ENCODE measurements at regions of chr5 and their contacts with region 1.

Region 1: GRCh38 chr5:60295423-60295822 is 401.9 kb upstream of the PDE4D start:
- DNase-seq: peak in 1 of 2 donors; percentile 12
- ATAC-seq: peak in 1 of 8 donors; percentile 58
- H3K4me3 ChIP-seq: no peak overlapping the region
- H3K27ac ChIP-seq: no peak overlapping the region
- H3K4me1 ChIP-seq: no peaks in the 10 kb centered on the region
- H3K27me3 ChIP-seq: no peaks in the 10 kb centered on the region
- CTCF ChIP-seq: peak in 8 of 9 donors; percentile 11 to 63 (median 45)

Region 2: DNA sequence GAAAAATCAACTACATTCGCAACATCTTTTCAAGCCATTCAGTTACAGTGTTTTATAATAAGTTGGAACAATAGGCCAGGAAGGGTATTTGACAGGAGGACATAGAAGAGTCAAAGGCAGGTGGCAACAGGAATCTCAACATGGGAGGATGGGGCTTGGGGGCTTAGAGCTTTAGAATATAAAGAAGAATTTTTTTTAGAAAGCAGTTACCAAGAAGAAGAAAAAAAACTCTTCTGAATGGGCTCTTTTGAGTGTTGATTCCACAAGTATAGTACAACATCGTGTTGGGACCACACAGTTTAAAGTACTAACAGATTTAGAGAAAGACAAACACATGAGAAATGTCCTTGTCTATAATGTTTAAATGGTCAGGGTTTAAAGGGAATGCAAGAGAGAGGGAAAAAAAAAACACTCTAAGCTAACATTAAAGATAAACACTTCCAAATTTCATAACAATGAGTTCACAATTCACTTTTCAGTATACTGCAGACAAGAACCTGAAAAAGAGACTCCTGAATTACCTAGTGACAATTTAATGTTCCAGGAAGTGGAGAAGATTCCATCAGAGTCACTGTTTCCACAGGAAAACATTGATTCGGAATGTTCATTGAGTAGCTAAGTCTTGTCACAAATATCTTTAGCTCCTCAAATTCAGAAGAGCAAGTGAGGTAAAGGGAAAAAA is 122.2 kb after region 1 on chr5:
- intact Hi-C with region 1: no loop called
- DNase-seq: no peak
- ATAC-seq: no peak
- H3K4me3 ChIP-seq: no peak overlapping the region
- H3K27ac ChIP-seq: no peak overlapping the region
- H3K4me1 ChIP-seq: no peaks in the 10 kb centered on the region
- H3K27me3 ChIP-seq: no peaks in the 10 kb centered on the region
- CTCF ChIP-seq: no peak

Region 3: DNA sequence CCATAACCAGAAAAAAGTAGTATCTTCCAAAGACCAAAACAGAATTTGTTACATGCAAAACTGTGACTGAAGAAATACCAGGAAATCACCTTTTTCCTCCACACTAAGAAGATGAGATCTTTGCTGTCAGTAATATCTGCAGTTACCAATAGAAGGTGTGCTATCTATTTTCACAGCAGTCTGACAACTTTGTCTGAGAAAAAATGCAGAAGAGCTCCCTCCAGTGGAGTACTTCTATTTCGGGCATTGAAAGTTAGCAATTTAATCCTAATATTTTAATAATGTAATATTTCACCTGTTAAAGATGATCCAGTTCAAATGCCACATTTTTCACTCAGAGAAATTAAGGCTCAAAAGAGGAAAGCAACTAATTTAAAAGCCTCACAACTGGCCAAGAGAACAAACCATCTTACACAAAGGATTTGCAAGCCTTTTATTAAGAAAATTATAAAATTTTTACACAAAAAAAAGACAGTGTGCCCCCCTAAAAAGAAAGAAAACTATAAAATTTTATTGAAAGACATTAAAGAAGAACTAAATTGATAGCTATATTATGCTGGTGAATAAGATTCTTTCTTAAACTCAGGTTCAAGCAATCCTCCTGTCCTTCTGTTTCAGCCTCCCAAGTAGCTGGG is 354.0 kb after region 1 on chr5:
- intact Hi-C with region 1: loop called in 2 of 10 experiments (anchors 10 kb)
- DNase-seq: no peak
- ATAC-seq: no peak
- H3K4me3 ChIP-seq: no peak overlapping the region
- H3K27ac ChIP-seq: no peak overlapping the region
- H3K4me1 ChIP-seq: peaks cover 0 to 6% (median 0%) of the 10 kb centered on the region in 9 donors
- H3K27me3 ChIP-seq: no peaks in the 10 kb centered on the region
- CTCF ChIP-seq: peak in 8 of 9 donors; percentile 17 to 63 (median 52)